ENCODE measurements at regions of chr10 and their contacts with region 1.

Region 1: GRCh38 chr10:97407211-97407951 is 6.2 kb upstream of the RRP12 start:
- DNase-seq: peak; percentile 73
- H3K4me3 Mint-ChIP-seq: peak overlapping the region; percentile 5
- H3K27ac Mint-ChIP-seq: peak overlapping the region; percentile 24
- H3K4me1 Mint-ChIP-seq: peaks cover 13% of the 10 kb centered on the region
- H3K27me3 Mint-ChIP-seq: peaks cover 4% of the 10 kb centered on the region

Region 2: GRCh38 chr10:97217299-97217698 is 190.1 kb before region 1 on chr10:
- CTCF ChIA-PET with region 1: no interaction called
- DNase-seq: no peak
- H3K4me3 Mint-ChIP-seq: no peak overlapping the region
- H3K27ac Mint-ChIP-seq: peak overlapping the region; percentile 52
- H3K4me1 Mint-ChIP-seq: peaks cover 30% of the 10 kb centered on the region
- H3K27me3 Mint-ChIP-seq: no peaks in the 10 kb centered on the region

Region 3: GRCh38 chr10:97425964-97426775 is 18.8 kb after region 1 on chr10 and contains the start of gene PGAM1:
- CTCF ChIA-PET with region 1: interaction called, 60 read pairs
- DNase-seq: peak; percentile 95
- H3K4me3 Mint-ChIP-seq: peak within 1 kb of the TSS; percentile 88
- H3K27ac Mint-ChIP-seq: peak within 1 kb of the TSS; percentile 94
- H3K4me1 Mint-ChIP-seq: peaks cover 54% of the 10 kb centered on the region
- H3K27me3 Mint-ChIP-seq: peaks cover 3% of the 10 kb centered on the region

Region 4: GRCh38 chr10:97434055-97434454 is 26.7 kb after region 1 on chr10:
- CTCF ChIA-PET with region 1: interaction called, 24 read pairs
- DNase-seq: no peak
- H3K4me3 Mint-ChIP-seq: no peak overlapping the region
- H3K27ac Mint-ChIP-seq: no peak overlapping the region
- H3K4me1 Mint-ChIP-seq: peaks cover 13% of the 10 kb centered on the region
- H3K27me3 Mint-ChIP-seq: no peaks in the 10 kb centered on the region

Region 5: GRCh38 chr10:97445722-97446639 is 38.6 kb after region 1 on chr10 and contains the starts of genes EXOSC1 and ZDHHC16:
- CTCF ChIA-PET with region 1: interaction called, 27 read pairs
- DNase-seq: peak; percentile 95
- H3K4me3 Mint-ChIP-seq: peak within 1 kb of the TSS; percentile 88
- H3K27ac Mint-ChIP-seq: peak within 1 kb of the TSS; percentile 90
- H3K4me1 Mint-ChIP-seq: peaks cover 60% of the 10 kb centered on the region
- H3K27me3 Mint-ChIP-seq: no peaks in the 10 kb centered on the region

Measured in activated naive CD4-positive, alpha-beta T cell treated with anti-CD3 and anti-CD28 coated beads, Interleukin-2, amount 10 ng/mL, durations not matched to agents 7 days and 5 days (primary cell).